GM13976 (cell line): ENCODE measurements at regions of chr5 and their contacts with region 1.

Region 1: DNA sequence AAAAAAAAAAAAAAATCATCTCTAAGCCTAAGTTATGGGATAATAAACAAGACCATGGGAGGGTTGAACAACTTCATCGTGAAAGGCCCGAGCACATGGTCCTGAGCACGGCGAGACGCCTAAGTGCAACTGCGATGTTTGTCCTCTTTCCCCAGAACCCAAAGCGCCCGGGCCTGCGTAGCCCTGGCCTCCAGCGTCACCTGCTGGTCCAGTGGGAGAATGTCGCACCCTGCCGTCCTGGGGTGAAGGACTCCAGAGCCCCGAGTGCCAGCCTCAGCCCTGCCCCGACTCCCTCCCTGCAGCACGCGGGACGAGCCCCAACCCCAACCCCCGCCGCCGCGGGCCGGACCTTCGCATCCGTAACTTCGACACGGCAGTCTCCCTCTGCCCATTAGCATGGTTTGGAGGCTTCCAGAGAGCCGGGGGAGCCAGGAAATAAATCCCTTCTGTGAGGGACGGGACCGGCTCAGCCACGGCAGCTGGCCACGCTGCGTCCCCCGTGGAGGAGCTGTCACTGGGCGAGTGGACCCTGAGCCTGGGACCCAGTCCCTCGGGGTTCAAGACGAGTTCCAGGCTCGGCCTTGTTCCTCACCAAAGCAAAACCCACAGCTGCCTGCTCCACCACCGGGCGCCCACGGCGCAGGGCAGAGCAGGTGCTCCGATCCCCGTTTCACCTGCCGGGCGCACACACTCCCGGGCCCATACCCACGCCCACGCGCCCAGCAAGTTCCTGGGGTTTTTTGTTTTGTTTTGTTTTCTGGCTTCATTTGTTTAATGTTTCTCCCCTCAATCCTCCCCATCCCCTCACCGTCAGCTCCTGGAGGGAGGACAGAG is 132.5 kb upstream of the HAND1 start:
- DNase-seq: peak; percentile 94
- CTCF ChIP-seq: peak; percentile 96

Region 2: GRCh38 chr5:154072414-154073171 is 537.9 kb before region 1 on chr5:
- in situ Hi-C with region 1: loop called (anchors 25 kb)
- DNase-seq: peak; percentile 77
- CTCF ChIP-seq: peak; percentile 84

Region 3: GRCh38 chr5:154478224-154478565 is 132.3 kb before region 1 on chr5 and contains the start of gene HAND1:
- in situ Hi-C with region 1: loop called (anchors 5 kb)
- DNase-seq: no peak
- CTCF ChIP-seq: no peak